Sciatic nerve (tissue), 2 donors: ENCODE measurements at regions of chr6 and their contacts with region 1.

Region 1: GRCh38 chr6:96821034-96821433 is 16.2 kb downstream of the GPR63 start:
- DNase-seq: no peak
- ATAC-seq: no peak

Region 2: DNA sequence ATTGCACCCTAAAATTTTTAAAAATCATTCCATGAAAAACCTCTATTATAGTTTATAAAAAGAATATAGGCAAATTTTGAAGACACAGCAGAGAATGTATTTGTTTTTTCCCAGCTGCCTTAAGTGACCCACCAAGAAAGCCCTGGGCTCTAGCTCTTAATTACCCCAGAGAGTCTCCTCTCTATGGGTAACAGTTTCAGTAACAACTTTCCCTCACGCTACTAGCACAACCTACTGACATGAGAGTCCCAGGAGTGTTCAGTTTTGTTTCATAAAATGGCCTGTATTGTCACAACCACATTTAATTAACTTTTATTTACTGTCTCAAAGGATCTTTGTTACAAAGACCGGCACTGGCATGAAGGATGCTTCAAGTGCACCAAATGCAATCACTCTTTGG is 216.6 kb before region 1 on chr6:
- intact Hi-C with region 1: no loop called
- DNase-seq: no peak
- ATAC-seq: no peak

Region 3: GRCh38 chr6:96749891-96750290 is 71.1 kb before region 1 on chr6:
- intact Hi-C with region 1: loop called (anchors 2 kb)
- DNase-seq: no peak
- ATAC-seq: no peak

Region 4: DNA sequence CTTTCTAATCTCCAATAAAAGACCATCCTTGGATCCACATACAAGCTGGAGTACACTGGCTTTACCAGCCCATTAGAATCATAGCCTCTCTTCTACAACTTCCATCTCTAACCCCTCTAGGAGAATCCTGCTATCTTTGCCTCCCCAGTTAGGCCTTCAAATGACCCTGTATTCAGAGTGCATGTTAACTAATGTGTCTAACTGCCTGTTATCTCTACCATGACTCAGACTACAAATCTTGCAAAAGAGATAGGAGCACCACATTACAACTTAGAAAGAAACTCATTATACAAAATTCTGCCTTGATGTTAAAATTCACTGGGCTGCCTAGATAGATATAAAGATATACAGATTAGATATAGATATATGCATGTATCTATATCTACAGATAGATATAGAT is 11.9 kb before region 1 on chr6:
- intact Hi-C with region 1: no loop called
- DNase-seq: no peak
- ATAC-seq: no peak

Region 5: DNA sequence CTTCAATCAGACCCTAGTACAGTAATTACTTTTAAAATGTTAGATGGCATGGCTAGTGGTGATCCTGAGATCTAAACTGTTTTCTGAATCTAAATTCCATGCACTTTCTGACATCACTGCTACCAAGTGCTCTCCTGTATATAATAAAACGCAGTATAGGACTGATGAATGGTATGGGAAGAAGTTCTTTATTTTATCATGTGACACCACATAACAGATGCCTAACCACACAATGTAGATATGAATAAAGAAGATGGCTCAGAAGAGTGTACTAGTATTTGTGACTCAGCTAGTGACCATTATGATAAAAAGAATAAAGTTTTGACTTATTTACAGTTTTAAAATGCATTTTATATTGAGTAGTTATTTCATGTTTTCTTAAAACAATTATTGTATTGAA is 68.1 kb after region 1 on chr6:
- intact Hi-C with region 1: no loop called
- DNase-seq: no peak
- ATAC-seq: no peak